Natural killer cell (primary cell): ENCODE measurements at regions of chr1 and their contacts with region 1.

Region 1: GRCh38 chr1:56676571-56677035 is 31.5 kb downstream of the PRKAA2 start:
- DNase-seq: no peak
- ATAC-seq: no peak
- H3K4me3 ChIP-seq: no peak overlapping the region
- H3K4me3 Mint-ChIP-seq: no peak overlapping the region
- H3K27ac ChIP-seq: no peak overlapping the region
- H3K27ac Mint-ChIP-seq: no peak overlapping the region
- H3K4me1 ChIP-seq: no peaks in the 10 kb centered on the region
- H3K4me1 Mint-ChIP-seq: no peaks in the 10 kb centered on the region
- H3K27me3 ChIP-seq: no peaks in the 10 kb centered on the region
- H3K27me3 Mint-ChIP-seq: peaks cover 0 to 4% of the 10 kb centered on the region in 2 donors
- CTCF ChIP-seq: no peak

Region 2: DNA sequence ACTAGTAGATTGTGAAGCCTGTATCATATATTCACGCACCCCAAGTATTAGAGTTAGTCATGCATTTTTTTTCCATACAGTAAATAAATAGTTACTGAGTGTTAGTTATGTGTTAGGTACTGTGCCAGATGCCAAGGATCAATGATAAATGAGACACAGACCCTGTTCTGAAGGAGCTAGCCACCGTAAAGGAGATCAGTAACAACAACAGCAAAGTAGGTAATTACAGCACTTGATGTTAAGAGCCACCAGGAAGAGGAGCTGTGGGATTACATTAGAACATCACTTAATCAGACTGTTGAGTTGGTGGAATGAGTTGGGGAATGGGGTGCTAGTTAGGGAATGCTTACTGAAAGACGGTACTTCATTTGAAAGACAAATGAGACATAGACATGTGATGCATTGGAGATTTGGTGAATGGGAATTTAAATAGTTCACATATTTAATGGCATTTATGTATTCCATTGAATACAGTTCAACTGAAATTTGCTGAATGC is 10.4 kb before region 1 on chr1:
- intact Hi-C with region 1: loop called (anchors 1 kb)
- DNase-seq: no peak
- ATAC-seq: no peak
- H3K4me3 ChIP-seq: no peak overlapping the region
- H3K4me3 Mint-ChIP-seq: no peak overlapping the region
- H3K27ac ChIP-seq: no peak overlapping the region
- H3K27ac Mint-ChIP-seq: no peak overlapping the region
- H3K4me1 ChIP-seq: no peaks in the 10 kb centered on the region
- H3K4me1 Mint-ChIP-seq: no peaks in the 10 kb centered on the region
- H3K27me3 ChIP-seq: no peaks in the 10 kb centered on the region
- H3K27me3 Mint-ChIP-seq: peaks cover 6 to 12% of the 10 kb centered on the region in 2 donors
- CTCF ChIP-seq: no peak